ENCODE measurements at regions of chr12 and their contacts with region 1.

Region 1: DNA sequence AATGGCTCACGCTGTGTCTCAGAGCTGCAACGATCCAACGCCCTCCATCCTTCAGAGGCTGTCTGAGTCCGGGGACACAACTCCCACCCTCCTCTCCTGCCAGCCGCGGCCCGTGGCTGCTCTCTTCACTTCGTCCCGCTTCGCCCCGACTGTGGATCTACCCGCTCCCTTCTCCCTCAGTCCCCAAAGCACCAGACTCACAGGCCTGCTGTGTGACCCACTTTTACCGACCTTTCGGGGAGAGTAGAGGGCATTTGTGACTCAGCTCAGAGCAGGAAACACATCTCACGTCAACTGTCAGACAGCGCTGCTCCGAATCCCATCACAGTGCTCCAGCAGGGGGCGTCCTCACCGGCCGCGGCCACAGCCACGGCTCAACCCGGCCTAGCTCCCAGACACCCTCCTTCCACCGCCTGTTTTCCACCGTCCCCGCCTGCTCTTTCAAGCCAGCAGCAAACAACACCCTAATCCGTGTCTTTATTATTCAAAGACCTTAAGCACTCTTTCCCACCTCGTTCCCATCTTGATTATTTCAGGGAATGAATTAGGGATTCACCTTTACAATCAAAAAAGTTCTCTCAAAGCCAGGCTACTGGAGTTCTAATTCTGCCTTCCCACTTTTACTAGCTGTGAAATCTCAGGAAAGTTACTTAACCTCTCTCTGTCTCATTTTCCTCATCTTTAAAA is 5.0 kb upstream of the AQP2 start:
- DNase-seq: peak; percentile 62
- ATAC-seq: peak; percentile 99
- H3K4me3 ChIP-seq: no peak overlapping the region
- H3K27ac ChIP-seq: no peak overlapping the region
- H3K4me1 ChIP-seq: peaks cover 3 to 13% of the 10 kb centered on the region in 2 experiments; a peak in 3 of 4 replicates
- H3K27me3 ChIP-seq: no peaks in the 10 kb centered on the region
- CTCF ChIP-seq: peak; percentile 76 to 93 (median 89)
- POLR2A ChIP-seq: no peak
- RAD21 ChIP-seq: peak; percentile 64

Region 2: GRCh38 chr12:49866859-49867579 is 78.5 kb before region 1 on chr12:
- CTCF ChIA-PET with region 1: interaction called, 14 read pairs
- POLR2A ChIA-PET with region 1: no interaction called
- RAD21 ChIA-PET with region 1: interaction called, 3 to 4 read pairs
- intact Hi-C with region 1: no loop called
- DNase-seq: peak; percentile 52
- ATAC-seq: peak; percentile 97
- H3K4me3 ChIP-seq: no peak overlapping the region
- H3K27ac ChIP-seq: no peak overlapping the region
- H3K4me1 ChIP-seq: peaks cover 0 to 11% of the 10 kb centered on the region in 2 experiments; a peak in 1 of 4 replicates
- H3K27me3 ChIP-seq: no peaks in the 10 kb centered on the region
- CTCF ChIP-seq: peak; percentile 82 to 99 (median 97)
- POLR2A ChIP-seq: no peak
- RAD21 ChIP-seq: peak; percentile 92

Region 3: DNA sequence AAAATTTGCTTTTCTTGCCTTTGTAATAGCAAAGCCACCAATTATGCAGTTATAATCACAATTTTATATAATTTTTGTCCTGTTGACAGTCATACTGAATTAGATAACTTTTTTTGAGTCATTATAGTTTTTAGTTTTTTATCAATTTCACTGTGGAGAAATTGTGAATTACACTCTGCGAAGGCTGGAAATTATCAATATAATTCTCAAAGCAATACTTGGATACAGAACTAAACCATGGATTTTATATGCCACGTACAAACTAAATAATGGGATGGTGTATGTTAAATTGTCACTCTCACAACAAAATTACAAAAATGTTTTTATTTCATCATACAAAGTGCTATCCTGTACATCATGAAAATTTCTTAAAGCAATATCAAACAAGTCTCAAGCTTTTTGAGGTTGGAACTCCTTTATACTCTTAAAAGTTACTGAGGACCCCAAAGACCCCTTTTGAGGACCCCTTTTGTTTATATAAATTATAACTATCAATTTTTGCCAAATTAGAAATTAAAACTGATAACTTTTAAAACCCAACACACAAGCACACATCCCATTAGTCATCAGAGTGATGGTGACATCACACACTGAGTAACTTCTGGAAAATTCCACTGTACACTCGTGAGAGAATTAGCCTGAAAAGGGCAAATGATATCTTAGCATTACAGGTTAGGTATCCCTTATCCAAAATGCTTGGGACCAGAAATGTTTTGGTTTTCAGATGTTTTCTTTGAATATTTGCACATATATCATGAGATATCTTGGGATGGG is 14.8 kb before region 1 on chr12:
- CTCF ChIA-PET with region 1: interaction called, 44 read pairs
- POLR2A ChIA-PET with region 1: no interaction called
- RAD21 ChIA-PET with region 1: no interaction called
- intact Hi-C with region 1: no loop called
- DNase-seq: no peak
- ATAC-seq: no peak
- H3K4me3 ChIP-seq: no peak overlapping the region
- H3K27ac ChIP-seq: no peak overlapping the region
- H3K4me1 ChIP-seq: no peaks in the 10 kb centered on the region; a peak in 1 of 4 replicates
- H3K27me3 ChIP-seq: no peaks in the 10 kb centered on the region
- CTCF ChIP-seq: no peak
- POLR2A ChIP-seq: no peak
- RAD21 ChIP-seq: no peak

Region 4: GRCh38 chr12:49959570-49960465 is 14.3 kb after region 1 on chr12:
- CTCF ChIA-PET with region 1: interaction called, 25 read pairs
- POLR2A ChIA-PET with region 1: interaction called, 7 read pairs
- RAD21 ChIA-PET with region 1: interaction called in 1 of 2 experiments, 3 read pairs
- intact Hi-C with region 1: no loop called
- DNase-seq: peak; percentile 50
- ATAC-seq: peak; percentile 84
- H3K4me3 ChIP-seq: 0 out of 4 replicates have a peak overlapping the region, but pooled peaks of 1 of the 2 experiments have one; percentile 1
- H3K27ac ChIP-seq: peak overlapping the region; percentile 45
- H3K4me1 ChIP-seq: peaks cover 30 to 36% of the 10 kb centered on the region in 2 experiments
- H3K27me3 ChIP-seq: no peaks in the 10 kb centered on the region
- CTCF ChIP-seq: no peak
- POLR2A ChIP-seq: no peak
- RAD21 ChIP-seq: no peak

Region 5: DNA sequence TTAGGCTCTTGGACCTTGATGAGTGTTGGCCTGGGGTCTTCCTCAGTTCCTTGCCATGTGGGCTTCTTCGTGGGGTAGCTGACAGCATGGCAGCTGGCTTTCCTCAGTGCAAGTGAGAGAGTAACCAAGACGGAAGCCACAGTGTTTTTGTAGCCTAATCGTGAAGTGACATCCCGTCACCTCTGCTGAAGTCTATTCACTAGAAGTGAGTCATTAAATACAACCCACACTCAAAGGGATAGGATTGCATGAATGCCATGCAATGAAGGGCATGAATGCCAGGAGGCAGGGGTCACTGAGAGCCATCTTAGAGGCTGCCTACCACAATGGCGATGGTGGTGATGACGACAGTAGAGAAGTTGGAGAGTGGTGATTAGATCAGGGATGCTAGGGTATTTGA is 98.3 kb after region 1 on chr12:
- CTCF ChIA-PET with region 1: interaction called, 12 read pairs
- POLR2A ChIA-PET with region 1: no interaction called
- RAD21 ChIA-PET with region 1: no interaction called
- intact Hi-C with region 1: no loop called
- DNase-seq: no peak
- ATAC-seq: no peak
- H3K4me3 ChIP-seq: no peak overlapping the region
- H3K27ac ChIP-seq: no peak overlapping the region
- H3K4me1 ChIP-seq: peaks cover 0 to 8% of the 10 kb centered on the region in 2 experiments; a peak in 2 of 4 replicates
- H3K27me3 ChIP-seq: no peaks in the 10 kb centered on the region
- CTCF ChIP-seq: no peak
- POLR2A ChIP-seq: no peak
- RAD21 ChIP-seq: no peak

Region 6: GRCh38 chr12:50375802-50376201 is 430.3 kb after region 1 on chr12:
- CTCF ChIA-PET with region 1: no interaction called
- POLR2A ChIA-PET with region 1: no interaction called
- RAD21 ChIA-PET with region 1: no interaction called
- intact Hi-C with region 1: no loop called
- DNase-seq: no peak
- ATAC-seq: no peak
- H3K4me3 ChIP-seq: no peak overlapping the region
- H3K27ac ChIP-seq: no peak overlapping the region; the same call in 1 of the 2 replicates
- H3K4me1 ChIP-seq: no peaks in the 10 kb centered on the region
- H3K27me3 ChIP-seq: no peaks in the 10 kb centered on the region
- CTCF ChIP-seq: no peak
- POLR2A ChIP-seq: no peak
- RAD21 ChIP-seq: no peak

Measured in HCT116 (cell line).